ENCODE measurements at regions of chr3 and their contacts with region 1.

Region 1: GRCh38 chr3:58082047-58082446 is 73.8 kb downstream of the FLNB start:
- DNase-seq: peak in 8 of 9 donors; percentile 27 to 82 (median 69)
- ATAC-seq: peak; percentile 79
- H3K4me3 ChIP-seq: no peak overlapping the region
- H3K4me3 Mint-ChIP-seq: peak overlapping the region; percentile 46 to 83 (median 76)
- H3K27ac ChIP-seq: peak overlapping the region; percentile 38
- H3K27ac Mint-ChIP-seq: peak overlapping the region; percentile 85 to 97 (median 94)
- H3K4me1 ChIP-seq: peaks cover 0 to 54% of the 10 kb centered on the region in 2 donors
- H3K4me1 Mint-ChIP-seq: peaks cover 35 to 71% (median 56%) of the 10 kb centered on the region in 7 donors
- H3K27me3 ChIP-seq: no peaks in the 10 kb centered on the region
- H3K27me3 Mint-ChIP-seq: no peaks in the 10 kb centered on the region

Region 2: GRCh38 chr3:58034738-58035523 is 47.1 kb before region 1 on chr3:
- CTCF ChIA-PET with region 1: no interaction called
- POLR2A ChIA-PET with region 1: no interaction called
- intact Hi-C with region 1: loop called (anchors 2 to 5 kb)
- DNase-seq: peak in 8 of 9 donors; percentile 41 to 83 (median 69)
- ATAC-seq: peak; percentile 95
- H3K4me3 ChIP-seq: no peak overlapping the region
- H3K4me3 Mint-ChIP-seq: peak overlapping the region; percentile 13 to 74 (median 50)
- H3K27ac ChIP-seq: peak overlapping the region; percentile 48
- H3K27ac Mint-ChIP-seq: peak overlapping the region; percentile 31 to 98 (median 93)
- H3K4me1 ChIP-seq: peaks cover 14 to 15% of the 10 kb centered on the region in 2 donors
- H3K4me1 Mint-ChIP-seq: peaks cover 27 to 84% (median 62%) of the 10 kb centered on the region in 7 donors
- H3K27me3 ChIP-seq: no peaks in the 10 kb centered on the region
- H3K27me3 Mint-ChIP-seq: peaks cover 0 to 2% (median 0%) of the 10 kb centered on the region in 5 donors

Region 3: DNA sequence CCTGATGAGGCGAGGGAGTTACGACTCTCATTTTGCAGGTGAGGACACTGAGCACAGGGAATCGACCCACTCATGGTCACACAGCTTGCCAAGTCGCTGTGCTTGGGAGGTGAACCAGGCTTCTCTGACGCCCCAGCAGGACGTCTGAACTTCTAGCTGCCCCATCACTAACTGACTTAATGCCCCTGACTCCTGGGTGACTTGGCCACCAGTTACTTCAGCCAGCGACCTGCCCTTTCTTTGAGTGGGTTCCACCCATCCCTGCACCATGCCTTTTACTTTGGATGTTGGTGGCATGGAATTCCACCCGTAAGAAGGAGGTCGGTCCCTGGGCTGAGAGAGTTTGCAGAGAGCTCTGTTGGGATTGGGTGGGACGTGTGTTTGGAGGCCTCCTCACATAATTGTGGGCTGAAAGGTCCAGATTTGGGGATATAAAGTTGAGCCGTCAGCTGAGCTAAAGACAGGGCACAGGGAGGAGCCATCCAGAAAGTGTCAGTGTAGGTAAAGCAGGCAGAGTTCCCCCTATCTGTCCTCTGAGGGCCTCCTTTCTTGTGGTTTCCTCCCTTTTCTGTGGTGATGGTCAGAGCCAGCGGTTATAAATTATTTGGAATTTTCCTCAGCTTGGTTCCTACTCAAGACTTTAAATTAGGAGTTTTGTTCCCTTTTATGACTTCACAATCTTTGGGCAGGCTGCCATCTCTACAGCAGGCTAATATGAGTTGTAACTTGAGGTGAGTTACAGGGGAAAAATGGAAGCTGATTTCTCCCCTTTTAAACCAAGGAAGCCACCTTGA is 18.8 kb before region 1 on chr3:
- CTCF ChIA-PET with region 1: interaction called, 6 read pairs
- POLR2A ChIA-PET with region 1: interaction called, 12 read pairs
- intact Hi-C with region 1: no loop called
- DNase-seq: no peak
- ATAC-seq: no peak
- H3K4me3 ChIP-seq: no peak overlapping the region
- H3K4me3 Mint-ChIP-seq: no peak overlapping the region
- H3K27ac ChIP-seq: no peak overlapping the region
- H3K27ac Mint-ChIP-seq: peak overlapping the region in 2 of 9 donors; percentile 72 to 82
- H3K4me1 ChIP-seq: no peaks in the 10 kb centered on the region
- H3K4me1 Mint-ChIP-seq: peaks cover 6 to 66% (median 30%) of the 10 kb centered on the region in 7 donors
- H3K27me3 ChIP-seq: no peaks in the 10 kb centered on the region
- H3K27me3 Mint-ChIP-seq: no peaks in the 10 kb centered on the region

Region 4: GRCh38 chr3:58271901-58272501 is 190.0 kb after region 1 on chr3:
- CTCF ChIA-PET with region 1: no interaction called
- POLR2A ChIA-PET with region 1: no interaction called
- intact Hi-C with region 1: no loop called
- DNase-seq: no peak
- ATAC-seq: peak; percentile 52
- H3K4me3 ChIP-seq: no peak overlapping the region
- H3K4me3 Mint-ChIP-seq: no peak overlapping the region
- H3K27ac ChIP-seq: no peak overlapping the region
- H3K27ac Mint-ChIP-seq: no peak overlapping the region
- H3K4me1 ChIP-seq: no peaks in the 10 kb centered on the region
- H3K4me1 Mint-ChIP-seq: peaks cover 0 to 11% (median 0%) of the 10 kb centered on the region in 7 donors
- H3K27me3 ChIP-seq: no peaks in the 10 kb centered on the region
- H3K27me3 Mint-ChIP-seq: no peaks in the 10 kb centered on the region

Measured in naive thymus-derived CD4-positive, alpha-beta T cell (primary cell).